H1 (cell line): ENCODE measurements at regions of chr7 and their contacts with region 1.

Region 1: DNA sequence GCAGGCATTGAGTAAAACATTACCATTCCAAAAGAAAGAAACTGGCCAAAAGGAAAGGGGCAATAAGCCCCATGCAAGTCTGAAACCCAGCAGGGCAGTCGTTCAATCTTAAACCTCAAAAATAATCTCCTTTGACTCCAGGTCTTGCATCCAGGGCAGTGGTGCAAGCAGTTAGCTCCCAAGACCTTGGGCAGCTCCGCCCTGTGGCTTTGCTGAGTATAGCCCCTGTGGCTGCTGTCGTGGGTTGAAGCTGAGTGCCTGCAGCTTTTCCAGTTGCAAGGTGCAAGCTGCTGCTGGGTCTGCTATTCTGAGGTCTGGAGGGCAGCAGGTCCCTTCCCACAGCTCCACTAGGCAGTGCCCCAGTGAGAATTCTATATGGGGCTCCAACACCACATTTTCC is 580.1 kb upstream of the AUTS2 start:
- DNase-seq: peak; percentile 34 to 66
- H3K4me3 ChIP-seq: no peak overlapping the region
- H3K27ac ChIP-seq: no peak overlapping the region
- H3K4me1 ChIP-seq: no peaks in the 10 kb centered on the region
- H3K27me3 ChIP-seq: no peaks in the 10 kb centered on the region
- CTCF ChIP-seq: peak; percentile 59 to 79 (median 77)
- EP300 ChIP-seq: no peak
- POLR2A ChIP-seq: no peak
- RAD21 ChIP-seq: peak; percentile 76 to 83

Region 2: DNA sequence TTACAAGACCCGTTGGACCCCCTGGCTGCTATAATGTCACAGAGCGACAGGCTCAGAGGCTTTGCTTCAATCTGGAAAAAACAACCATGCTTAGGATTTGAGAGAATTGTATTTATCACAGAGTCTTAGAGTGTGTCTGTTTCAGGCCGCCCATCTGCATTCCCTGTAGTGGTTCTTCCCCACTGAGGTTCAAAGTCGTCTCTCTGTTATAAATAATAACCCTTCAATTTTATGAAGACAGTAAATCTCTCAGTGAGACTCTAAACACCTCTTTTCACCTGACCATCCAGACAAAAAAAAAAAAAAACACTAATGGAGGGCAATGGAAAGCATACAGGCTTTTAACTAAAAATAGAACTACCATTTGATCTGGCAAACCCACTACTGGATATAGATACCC is 14.6 kb after region 1 on chr7:
- CTCF ChIA-PET with region 1: interaction called, 12 read pairs
- POLR2A ChIA-PET with region 1: no interaction called
- DNase-seq: no peak
- H3K4me3 ChIP-seq: no peak overlapping the region
- H3K27ac ChIP-seq: no peak overlapping the region
- H3K4me1 ChIP-seq: no peaks in the 10 kb centered on the region
- H3K27me3 ChIP-seq: no peaks in the 10 kb centered on the region
- CTCF ChIP-seq: no peak
- EP300 ChIP-seq: no peak
- POLR2A ChIP-seq: no peak
- RAD21 ChIP-seq: no peak